Activated naive CD4-positive, alpha-beta T cell treated with anti-CD3 and anti-CD28 coated beads, Interleukin-2, amount 10 ng/mL, durations not matched to agents 7 days and 5 days (primary cell): ENCODE measurements at regions of chr11 and their contacts with region 1.

Region 1: DNA sequence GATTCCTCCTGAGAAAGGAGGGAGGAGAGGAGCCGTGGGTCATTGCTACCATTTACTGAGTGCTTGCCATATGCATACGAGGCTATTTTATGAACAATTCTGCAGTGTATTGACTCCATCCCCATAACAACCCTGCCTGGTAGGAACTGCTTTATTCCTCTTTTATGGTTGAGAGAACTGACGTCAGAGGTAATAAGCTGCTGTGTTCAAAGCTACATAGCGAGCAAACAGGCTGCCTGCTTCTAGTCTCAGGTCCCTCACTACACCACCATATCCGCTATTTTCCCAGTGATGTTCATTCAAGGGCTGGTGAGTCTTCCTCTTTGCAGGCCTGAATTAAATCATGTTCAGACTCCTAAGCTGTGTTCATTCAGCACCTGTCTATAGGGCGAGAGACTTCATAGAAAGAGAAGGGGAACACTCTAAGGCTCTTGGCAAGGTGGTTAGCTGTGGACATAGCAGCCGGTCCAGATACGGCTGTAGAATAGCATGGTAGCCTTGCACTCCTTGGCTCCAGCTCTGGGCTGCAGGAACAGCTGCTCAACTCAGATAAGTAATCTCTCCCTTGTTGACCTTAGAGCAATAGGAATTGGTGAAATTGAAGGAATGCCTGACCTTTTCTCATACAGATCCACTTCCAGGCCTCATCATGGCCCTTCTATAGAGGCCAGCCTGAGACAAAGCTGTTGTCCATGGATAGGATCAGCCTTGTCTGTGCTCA is 82.6 kb downstream of the MICAL2 start:
- DNase-seq: no peak
- H3K4me3 Mint-ChIP-seq: no peak overlapping the region
- H3K27ac Mint-ChIP-seq: no peak overlapping the region
- H3K4me1 Mint-ChIP-seq: peaks cover 64% of the 10 kb centered on the region
- H3K27me3 Mint-ChIP-seq: no peaks in the 10 kb centered on the region

Region 2: GRCh38 chr11:12079726-12080556 is 113.0 kb before region 1 on chr11:
- CTCF ChIA-PET with region 1: no interaction called
- DNase-seq: no peak
- H3K4me3 Mint-ChIP-seq: no peak overlapping the region
- H3K27ac Mint-ChIP-seq: no peak overlapping the region
- H3K4me1 Mint-ChIP-seq: peaks cover 2% of the 10 kb centered on the region
- H3K27me3 Mint-ChIP-seq: peaks cover 35% of the 10 kb centered on the region

Region 3: GRCh38 chr11:12179019-12179418 is 13.9 kb before region 1 on chr11:
- CTCF ChIA-PET with region 1: interaction called, 14 read pairs
- DNase-seq: no peak
- H3K4me3 Mint-ChIP-seq: no peak overlapping the region
- H3K27ac Mint-ChIP-seq: no peak overlapping the region
- H3K4me1 Mint-ChIP-seq: peaks cover 56% of the 10 kb centered on the region
- H3K27me3 Mint-ChIP-seq: no peaks in the 10 kb centered on the region